B cell (primary cell): ENCODE measurements at regions of chr7 and their contacts with region 1.

Region 1: GRCh38 chr7:30062591-30062990 is 34.4 kb downstream of the PLEKHA8 start:
- DNase-seq: peak; percentile 56
- ATAC-seq: peak; percentile 67
- H3K4me3 ChIP-seq: no peak overlapping the region
- H3K4me3 Mint-ChIP-seq: no peak overlapping the region
- H3K27ac ChIP-seq: no peak overlapping the region
- H3K27ac Mint-ChIP-seq: peak overlapping the region; percentile 59
- H3K4me1 ChIP-seq: peaks cover 5 to 6% of the 10 kb centered on the region in 2 donors
- H3K4me1 Mint-ChIP-seq: peaks cover 14% of the 10 kb centered on the region
- H3K27me3 ChIP-seq: no peaks in the 10 kb centered on the region
- H3K27me3 Mint-ChIP-seq: no peaks in the 10 kb centered on the region
- CTCF ChIP-seq: peak; percentile 76

Region 2: GRCh38 chr7:29639881-29640595 is 422.6 kb before region 1 on chr7:
- CTCF ChIA-PET with region 1: interaction called, 3 read pairs
- POLR2A ChIA-PET with region 1: no interaction called
- intact Hi-C with region 1: loop called (anchors 2 kb)
- DNase-seq: no peak
- ATAC-seq: no peak
- H3K4me3 ChIP-seq: no peak overlapping the region
- H3K4me3 Mint-ChIP-seq: no peak overlapping the region
- H3K27ac ChIP-seq: no peak overlapping the region
- H3K27ac Mint-ChIP-seq: no peak overlapping the region
- H3K4me1 ChIP-seq: no peaks in the 10 kb centered on the region
- H3K4me1 Mint-ChIP-seq: no peaks in the 10 kb centered on the region
- H3K27me3 ChIP-seq: no peaks in the 10 kb centered on the region
- H3K27me3 Mint-ChIP-seq: no peaks in the 10 kb centered on the region
- CTCF ChIP-seq: no peak

Region 3: DNA sequence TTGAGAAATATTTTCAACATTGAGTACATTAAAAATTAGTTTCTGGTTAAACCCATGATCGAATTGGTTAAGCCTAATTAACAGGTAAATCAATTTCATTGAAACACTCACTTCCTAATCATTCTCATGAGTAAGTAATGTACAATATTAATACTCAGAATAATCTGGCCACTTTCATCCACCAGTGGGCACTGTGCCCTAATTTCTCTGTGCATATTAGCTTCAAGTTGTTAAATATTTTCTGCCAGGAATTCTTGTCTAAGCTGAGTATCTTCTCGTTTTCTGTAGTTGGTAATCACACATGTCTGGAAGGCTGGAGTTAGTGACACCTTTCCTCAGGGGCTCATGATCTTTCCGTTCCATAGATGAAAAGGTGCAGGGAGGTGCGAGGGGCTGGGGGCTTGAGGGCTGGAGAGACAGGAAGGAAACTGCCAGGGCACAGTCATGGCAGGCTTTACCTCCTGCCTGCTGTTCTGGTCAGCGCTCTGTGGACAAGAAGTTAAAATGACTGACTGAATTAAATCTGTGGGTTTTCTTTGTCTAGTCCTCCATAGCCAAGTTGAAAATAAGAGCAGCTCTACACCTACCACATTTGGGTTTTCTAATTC is 184.4 kb before region 1 on chr7:
- CTCF ChIA-PET with region 1: interaction called, 128 read pairs
- POLR2A ChIA-PET with region 1: no interaction called
- intact Hi-C with region 1: loop called (anchors 1 kb)
- DNase-seq: peak; percentile 59
- ATAC-seq: no peak
- H3K4me3 ChIP-seq: no peak overlapping the region
- H3K4me3 Mint-ChIP-seq: no peak overlapping the region
- H3K27ac ChIP-seq: no peak overlapping the region
- H3K27ac Mint-ChIP-seq: no peak overlapping the region
- H3K4me1 ChIP-seq: peaks cover 0 to under 1% of the 10 kb centered on the region in 2 donors
- H3K4me1 Mint-ChIP-seq: peaks cover 3% of the 10 kb centered on the region
- H3K27me3 ChIP-seq: peaks cover 0 to 3% (median 1%) of the 10 kb centered on the region in 4 experiments
- H3K27me3 Mint-ChIP-seq: peaks cover 25% of the 10 kb centered on the region
- CTCF ChIP-seq: peak; percentile 77

Region 4: DNA sequence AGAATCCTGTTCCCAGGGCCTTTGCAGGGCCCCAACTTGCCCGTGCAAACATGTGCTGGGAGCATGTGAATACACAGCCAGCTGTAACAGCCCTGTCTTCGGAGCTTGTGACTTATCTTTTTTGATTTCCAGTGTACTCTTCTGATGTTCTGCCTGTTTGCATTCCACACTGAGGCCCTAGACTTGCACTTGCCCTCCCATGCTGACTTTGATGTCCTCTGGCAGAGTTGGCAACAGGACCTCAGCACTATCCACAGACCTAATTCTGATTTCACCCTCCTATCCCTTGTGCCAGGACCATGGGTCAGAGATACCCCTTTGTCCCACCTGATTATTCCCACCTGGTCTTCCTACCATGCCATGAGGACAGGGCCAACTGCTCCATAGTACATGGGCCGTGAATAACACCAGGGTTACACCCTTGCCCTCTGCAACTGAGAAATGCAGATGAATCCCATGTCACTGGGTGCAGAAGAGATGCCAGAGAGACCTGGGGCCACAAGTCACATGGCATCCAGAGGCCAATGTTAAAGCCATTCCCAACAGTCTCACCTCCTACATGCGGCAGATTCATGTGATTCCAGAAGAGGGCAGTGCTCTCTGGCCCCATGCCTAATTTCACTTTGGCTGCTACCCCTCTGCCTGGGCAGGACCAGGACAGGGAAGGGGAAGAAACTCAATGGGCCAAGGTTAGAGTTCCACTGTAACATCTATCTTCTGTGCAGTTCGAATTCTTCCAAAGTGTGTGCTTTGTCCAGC is 116.0 kb before region 1 on chr7:
- CTCF ChIA-PET with region 1: interaction called, 21 read pairs
- POLR2A ChIA-PET with region 1: no interaction called
- intact Hi-C with region 1: loop called (anchors 2 kb)
- DNase-seq: peak; percentile 13
- ATAC-seq: no peak
- H3K4me3 ChIP-seq: no peak overlapping the region
- H3K4me3 Mint-ChIP-seq: no peak overlapping the region
- H3K27ac ChIP-seq: no peak overlapping the region
- H3K27ac Mint-ChIP-seq: no peak overlapping the region
- H3K4me1 ChIP-seq: no peaks in the 10 kb centered on the region
- H3K4me1 Mint-ChIP-seq: no peaks in the 10 kb centered on the region
- H3K27me3 ChIP-seq: no peaks in the 10 kb centered on the region
- H3K27me3 Mint-ChIP-seq: no peaks in the 10 kb centered on the region
- CTCF ChIP-seq: no peak

Region 5: DNA sequence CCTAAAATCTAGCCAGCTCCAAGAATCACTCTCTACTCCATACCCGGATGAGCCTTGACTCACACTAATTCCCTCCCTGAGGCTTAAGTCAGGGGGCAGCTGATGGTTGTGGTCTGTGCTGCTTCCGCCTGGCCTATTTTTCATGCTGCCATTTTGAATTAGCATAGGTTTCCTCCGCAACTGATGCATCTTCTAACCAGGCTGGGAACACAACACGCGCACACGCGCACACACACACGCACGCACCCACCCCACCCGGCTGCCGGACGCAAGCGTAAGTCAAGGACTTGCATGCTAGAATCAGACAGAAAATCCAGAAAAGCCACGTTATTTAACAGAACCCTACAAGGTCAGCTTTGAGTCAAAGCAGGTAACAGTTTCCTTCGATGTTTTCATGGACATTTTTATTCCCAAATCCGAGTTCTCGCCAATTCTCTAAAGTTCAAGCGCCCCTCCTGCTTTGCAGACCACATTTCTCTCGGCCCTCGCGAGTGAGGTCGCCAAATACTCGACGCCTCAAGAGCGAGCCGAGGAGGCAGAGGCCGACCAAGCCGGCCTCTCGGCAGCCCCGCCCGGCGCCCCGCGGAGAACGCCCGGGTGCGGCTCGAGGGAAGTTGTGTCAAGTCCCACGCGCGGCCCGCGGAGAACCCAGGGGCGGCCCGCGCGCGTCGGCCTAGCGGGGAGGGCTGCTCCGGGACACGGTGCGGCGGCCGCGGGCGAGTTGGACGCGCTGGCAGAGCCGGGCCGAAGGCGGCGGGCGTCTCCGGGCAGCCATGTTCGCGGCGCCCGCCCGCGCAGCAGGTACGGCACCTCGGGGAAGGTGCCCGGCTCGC is 74.0 kb before region 1 on chr7:
- CTCF ChIA-PET with region 1: interaction called, 8 read pairs
- POLR2A ChIA-PET with region 1: no interaction called
- intact Hi-C with region 1: loop called (anchors 2 kb)
- DNase-seq: peak; percentile 72
- ATAC-seq: peak; percentile 25
- H3K4me3 ChIP-seq: peak overlapping the region; percentile 42 to 96 (median 89)
- H3K4me3 Mint-ChIP-seq: peak overlapping the region; percentile 94
- H3K27ac ChIP-seq: peak overlapping the region; percentile 66 to 82
- H3K27ac Mint-ChIP-seq: peak overlapping the region; percentile 97
- H3K4me1 ChIP-seq: peaks cover 32 to 39% of the 10 kb centered on the region in 2 donors
- H3K4me1 Mint-ChIP-seq: peaks cover 41% of the 10 kb centered on the region
- H3K27me3 ChIP-seq: peaks cover 0 to 18% (median 0%) of the 10 kb centered on the region in 4 experiments
- H3K27me3 Mint-ChIP-seq: no peaks in the 10 kb centered on the region
- CTCF ChIP-seq: no peak

Region 6: DNA sequence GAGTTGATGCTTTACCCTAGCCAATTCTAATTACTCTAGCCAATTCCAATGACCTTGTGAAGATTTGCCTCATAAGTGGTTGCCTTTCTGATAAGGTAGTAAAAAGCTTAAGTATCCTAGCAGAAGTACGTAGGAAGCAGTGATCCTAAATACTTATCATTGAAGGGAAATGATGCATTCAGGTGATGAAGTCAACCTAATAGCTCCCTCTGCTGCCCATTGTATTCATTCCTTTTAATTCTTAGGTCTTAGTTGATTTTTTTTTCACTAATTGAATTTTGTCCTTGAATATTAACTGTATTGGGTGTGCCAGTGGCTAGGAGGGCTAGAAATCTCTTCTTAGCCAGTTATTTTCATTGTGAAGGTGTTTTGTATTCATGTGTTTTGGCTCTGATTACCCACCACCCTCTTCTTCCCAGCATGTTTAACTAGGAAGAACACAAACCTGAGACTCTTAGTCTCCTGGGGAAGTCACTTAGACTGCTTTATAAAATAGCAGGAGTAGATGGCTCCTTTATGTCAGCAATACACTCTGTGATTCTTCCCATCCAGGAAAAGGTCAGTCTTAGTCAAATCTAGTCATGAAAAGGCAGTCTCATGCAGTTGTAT is 11.9 kb after region 1 on chr7:
- CTCF ChIA-PET with region 1: interaction called, 18 read pairs
- POLR2A ChIA-PET with region 1: no interaction called
- intact Hi-C with region 1: no loop called
- DNase-seq: peak; percentile 34
- ATAC-seq: no peak
- H3K4me3 ChIP-seq: no peak overlapping the region
- H3K4me3 Mint-ChIP-seq: no peak overlapping the region
- H3K27ac ChIP-seq: no peak overlapping the region
- H3K27ac Mint-ChIP-seq: no peak overlapping the region
- H3K4me1 ChIP-seq: no peaks in the 10 kb centered on the region
- H3K4me1 Mint-ChIP-seq: no peaks in the 10 kb centered on the region
- H3K27me3 ChIP-seq: no peaks in the 10 kb centered on the region
- H3K27me3 Mint-ChIP-seq: no peaks in the 10 kb centered on the region
- CTCF ChIP-seq: peak; percentile 64

Region 7: GRCh38 chr7:30091491-30091912 is 28.9 kb after region 1 on chr7:
- CTCF ChIA-PET with region 1: no interaction called
- POLR2A ChIA-PET with region 1: no interaction called
- intact Hi-C with region 1: no loop called
- DNase-seq: no peak
- ATAC-seq: no peak
- H3K4me3 ChIP-seq: no peak overlapping the region
- H3K4me3 Mint-ChIP-seq: no peak overlapping the region
- H3K27ac ChIP-seq: no peak overlapping the region
- H3K27ac Mint-ChIP-seq: no peak overlapping the region
- H3K4me1 ChIP-seq: no peaks in the 10 kb centered on the region
- H3K4me1 Mint-ChIP-seq: no peaks in the 10 kb centered on the region
- H3K27me3 ChIP-seq: no peaks in the 10 kb centered on the region
- H3K27me3 Mint-ChIP-seq: no peaks in the 10 kb centered on the region
- CTCF ChIP-seq: no peak